ENCODE measurements at regions of chr3 and their contacts with region 1.

Region 1: DNA sequence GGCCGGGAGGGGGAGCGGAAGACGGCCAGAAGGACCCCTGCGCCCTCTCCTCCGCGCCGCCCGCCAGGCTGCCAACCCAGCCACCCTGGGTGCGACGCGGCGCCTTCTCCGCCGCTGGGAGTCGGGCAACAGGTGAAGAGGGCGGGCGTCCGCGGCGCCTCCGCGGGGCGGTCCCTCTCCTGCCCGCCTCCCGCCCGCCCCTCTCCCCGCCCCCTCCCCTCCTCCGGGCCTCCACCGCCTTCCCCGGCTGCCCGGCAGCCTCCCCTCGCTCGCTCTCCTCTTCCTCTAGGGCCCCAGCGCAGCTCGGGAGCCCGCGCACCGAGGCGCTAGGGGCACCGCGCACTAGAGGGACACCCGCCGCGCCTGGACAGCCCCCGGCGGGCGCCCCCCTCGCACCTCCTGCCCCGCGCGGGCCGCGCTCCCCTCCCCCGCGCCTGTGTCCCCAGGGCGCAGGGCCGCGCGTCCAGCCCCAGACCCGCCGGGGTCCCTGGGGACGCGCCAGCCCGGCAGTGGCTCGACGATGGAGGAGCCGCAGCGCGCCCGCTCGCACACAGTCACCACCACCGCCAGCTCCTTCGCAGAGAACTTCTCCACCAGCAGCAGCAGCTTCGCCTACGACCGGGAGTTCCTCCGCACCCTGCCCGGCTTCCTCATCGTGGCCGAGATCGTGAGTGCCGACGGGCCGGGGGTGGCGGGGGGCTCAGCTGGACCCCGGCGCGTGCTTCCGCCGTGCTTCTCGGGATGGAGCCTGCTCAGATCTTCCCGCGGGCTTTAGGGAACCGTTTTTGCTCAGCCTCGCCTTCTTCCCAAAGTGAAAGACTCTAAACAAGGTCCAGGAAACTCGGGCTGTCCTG is at the start of gene CMTM8:
- DNase-seq: peak; percentile 65 to 72 (median 67)
- H3K4me3 ChIP-seq: peak within 1 kb of the TSS; percentile 58 to 63
- H3K4me3 Mint-ChIP-seq: peak within 1 kb of the TSS; percentile 87 to 93 (median 90)
- H3K27ac ChIP-seq: peak within 1 kb of the TSS; percentile 57
- H3K27ac Mint-ChIP-seq: peak within 1 kb of the TSS; percentile 41 to 91 (median 66)
- H3K4me1 ChIP-seq: peaks cover 35% of the 10 kb centered on the region
- H3K4me1 Mint-ChIP-seq: peaks cover 28 to 50% (median 41%) of the 10 kb centered on the region in 4 donors
- H3K27me3 ChIP-seq: no peaks in the 10 kb centered on the region
- H3K27me3 Mint-ChIP-seq: no peaks in the 10 kb centered on the region
- total RNA-seq, gene CMTM8: 16.8 to 17.8 TPM

Region 2: DNA sequence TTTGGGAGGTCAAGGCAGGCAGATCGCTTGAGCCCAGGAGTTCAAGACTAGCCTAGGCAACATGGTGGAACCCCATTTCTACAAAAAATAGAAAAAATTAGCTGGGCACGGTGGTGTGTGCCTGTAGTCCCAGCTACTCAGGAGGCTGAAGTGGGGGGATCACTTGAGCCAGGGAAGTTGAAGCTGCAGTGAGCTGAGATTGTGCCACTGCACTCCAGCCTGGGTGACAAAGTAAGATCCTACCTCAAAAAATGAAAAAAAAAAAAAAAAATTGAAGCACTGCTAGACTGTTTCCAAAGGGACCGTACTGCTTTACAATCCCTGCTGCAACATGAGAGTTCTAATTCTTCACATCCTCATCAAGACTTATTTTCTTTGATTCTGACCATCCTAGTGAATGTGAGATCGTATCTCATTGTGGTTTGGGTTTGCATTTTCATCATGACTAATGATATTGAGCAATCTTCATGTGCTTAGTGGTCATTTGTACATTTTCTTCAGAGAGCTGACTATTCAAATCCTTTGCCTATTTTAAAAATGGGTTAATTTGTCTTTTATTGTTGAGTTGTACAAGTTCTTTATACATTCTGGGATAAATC is 10.6 kb after region 1 on chr3:
- CTCF ChIA-PET with region 1: interaction called, 10 read pairs
- POLR2A ChIA-PET with region 1: interaction called, 6 read pairs
- intact Hi-C with region 1: no loop called
- DNase-seq: no peak
- H3K4me3 ChIP-seq: no peak overlapping the region
- H3K4me3 Mint-ChIP-seq: peak overlapping the region in 2 of 8 donors; percentile 12 to 59
- H3K27ac ChIP-seq: no peak overlapping the region
- H3K27ac Mint-ChIP-seq: peak overlapping the region in 1 of 7 donors; percentile 46
- H3K4me1 ChIP-seq: peaks cover 38% of the 10 kb centered on the region
- H3K4me1 Mint-ChIP-seq: peaks cover 30 to 45% (median 34%) of the 10 kb centered on the region in 4 donors
- H3K27me3 ChIP-seq: no peaks in the 10 kb centered on the region
- H3K27me3 Mint-ChIP-seq: no peaks in the 10 kb centered on the region

Region 3: GRCh38 chr3:32257639-32258038 is 19.0 kb after region 1 on chr3:
- CTCF ChIA-PET with region 1: interaction called, 26 read pairs
- POLR2A ChIA-PET with region 1: interaction called, 4 read pairs
- intact Hi-C with region 1: no loop called
- DNase-seq: peak in 1 of 5 donors; percentile 6
- H3K4me3 ChIP-seq: no peak overlapping the region
- H3K4me3 Mint-ChIP-seq: peak overlapping the region in 4 of 8 donors; percentile 7 to 52 (median 12)
- H3K27ac ChIP-seq: no peak overlapping the region
- H3K27ac Mint-ChIP-seq: peak overlapping the region in 4 of 7 donors; percentile 1 to 24 (median 13)
- H3K4me1 ChIP-seq: peaks cover 19% of the 10 kb centered on the region
- H3K4me1 Mint-ChIP-seq: peaks cover 12 to 33% (median 21%) of the 10 kb centered on the region in 4 donors
- H3K27me3 ChIP-seq: no peaks in the 10 kb centered on the region
- H3K27me3 Mint-ChIP-seq: no peaks in the 10 kb centered on the region

Region 4: DNA sequence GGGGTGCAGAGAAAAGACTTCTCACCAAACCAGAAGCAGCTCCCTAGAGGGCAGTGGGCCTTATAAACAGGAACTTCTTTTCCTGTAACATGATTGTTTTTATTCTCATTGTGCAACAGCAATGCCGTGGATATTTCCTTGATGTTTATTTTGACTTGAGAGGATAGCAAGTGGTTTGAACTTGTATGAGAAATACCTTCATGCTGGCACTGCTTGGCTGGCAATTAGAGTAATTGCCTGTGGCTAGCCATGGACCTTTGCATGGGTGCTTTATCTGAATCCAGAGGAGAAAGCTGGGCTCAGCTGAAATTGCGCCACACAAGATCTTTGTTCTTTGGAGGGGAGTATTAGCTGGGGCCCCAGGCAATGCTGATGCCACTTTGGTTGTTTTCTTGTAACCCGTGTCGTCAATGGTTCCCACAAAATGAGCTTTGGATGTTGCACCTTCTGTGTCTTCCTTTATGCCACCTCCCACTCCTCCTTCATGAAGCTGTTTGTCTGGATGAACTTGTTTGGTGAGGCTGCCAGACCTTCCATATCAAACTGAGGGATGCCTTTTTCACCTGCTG is 37.7 kb after region 1 on chr3:
- CTCF ChIA-PET with region 1: interaction called, 12 read pairs
- POLR2A ChIA-PET with region 1: interaction called, 3 read pairs
- intact Hi-C with region 1: no loop called
- DNase-seq: no peak
- H3K4me3 ChIP-seq: no peak overlapping the region
- H3K4me3 Mint-ChIP-seq: no peak overlapping the region
- H3K27ac ChIP-seq: no peak overlapping the region
- H3K27ac Mint-ChIP-seq: peak overlapping the region in 2 of 7 donors; percentile 37 to 79
- H3K4me1 ChIP-seq: peaks cover 5% of the 10 kb centered on the region
- H3K4me1 Mint-ChIP-seq: peaks cover 17 to 27% (median 24%) of the 10 kb centered on the region in 4 donors
- H3K27me3 ChIP-seq: no peaks in the 10 kb centered on the region
- H3K27me3 Mint-ChIP-seq: no peaks in the 10 kb centered on the region

Region 5: GRCh38 chr3:32285891-32286290 is 47.2 kb after region 1 on chr3:
- CTCF ChIA-PET with region 1: interaction called, 72 read pairs
- POLR2A ChIA-PET with region 1: interaction called, 11 read pairs
- intact Hi-C with region 1: loop called (anchors 2 kb)
- DNase-seq: peak in 1 of 5 donors; percentile 46
- H3K4me3 ChIP-seq: no peak overlapping the region
- H3K4me3 Mint-ChIP-seq: peak overlapping the region in 7 of 8 donors; percentile 6 to 74 (median 59)
- H3K27ac ChIP-seq: peak overlapping the region; percentile 31
- H3K27ac Mint-ChIP-seq: peak overlapping the region; percentile 68 to 90 (median 83)
- H3K4me1 ChIP-seq: peaks cover 53% of the 10 kb centered on the region
- H3K4me1 Mint-ChIP-seq: peaks cover 30 to 62% (median 43%) of the 10 kb centered on the region in 4 donors
- H3K27me3 ChIP-seq: no peaks in the 10 kb centered on the region
- H3K27me3 Mint-ChIP-seq: no peaks in the 10 kb centered on the region

Region 6: DNA sequence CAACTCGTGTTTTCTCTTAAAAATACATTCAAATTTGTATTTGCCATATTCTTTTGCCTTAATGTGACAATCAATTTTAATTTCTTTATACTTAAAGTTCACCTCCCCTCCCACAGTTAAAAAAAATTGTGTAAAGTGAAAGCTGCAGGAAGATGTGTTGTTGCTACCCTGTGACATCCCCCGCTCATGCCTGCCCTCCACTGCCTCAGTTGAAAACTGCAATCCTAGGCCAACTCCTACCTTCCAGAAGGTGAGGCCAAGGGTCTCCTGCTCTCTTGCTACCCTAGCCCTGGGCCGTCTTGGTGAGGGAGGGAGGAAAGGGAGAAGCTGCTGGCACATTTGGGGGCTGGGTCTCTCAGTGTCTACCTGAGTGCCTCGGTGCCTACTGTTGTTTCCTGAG is 96.0 kb after region 1 on chr3:
- CTCF ChIA-PET with region 1: interaction called, 20 read pairs
- POLR2A ChIA-PET with region 1: interaction called, 15 read pairs
- intact Hi-C with region 1: loop called (anchors 1 kb)
- DNase-seq: peak; percentile 54 to 63 (median 58)
- H3K4me3 ChIP-seq: no peak overlapping the region
- H3K4me3 Mint-ChIP-seq: peak overlapping the region in 7 of 8 donors; percentile 32 to 74 (median 55)
- H3K27ac ChIP-seq: peak overlapping the region; percentile 24
- H3K27ac Mint-ChIP-seq: peak overlapping the region; percentile 7 to 84 (median 75)
- H3K4me1 ChIP-seq: peaks cover 45% of the 10 kb centered on the region
- H3K4me1 Mint-ChIP-seq: peaks cover 39 to 60% (median 52%) of the 10 kb centered on the region in 4 donors
- H3K27me3 ChIP-seq: no peaks in the 10 kb centered on the region
- H3K27me3 Mint-ChIP-seq: no peaks in the 10 kb centered on the region

Region 7: DNA sequence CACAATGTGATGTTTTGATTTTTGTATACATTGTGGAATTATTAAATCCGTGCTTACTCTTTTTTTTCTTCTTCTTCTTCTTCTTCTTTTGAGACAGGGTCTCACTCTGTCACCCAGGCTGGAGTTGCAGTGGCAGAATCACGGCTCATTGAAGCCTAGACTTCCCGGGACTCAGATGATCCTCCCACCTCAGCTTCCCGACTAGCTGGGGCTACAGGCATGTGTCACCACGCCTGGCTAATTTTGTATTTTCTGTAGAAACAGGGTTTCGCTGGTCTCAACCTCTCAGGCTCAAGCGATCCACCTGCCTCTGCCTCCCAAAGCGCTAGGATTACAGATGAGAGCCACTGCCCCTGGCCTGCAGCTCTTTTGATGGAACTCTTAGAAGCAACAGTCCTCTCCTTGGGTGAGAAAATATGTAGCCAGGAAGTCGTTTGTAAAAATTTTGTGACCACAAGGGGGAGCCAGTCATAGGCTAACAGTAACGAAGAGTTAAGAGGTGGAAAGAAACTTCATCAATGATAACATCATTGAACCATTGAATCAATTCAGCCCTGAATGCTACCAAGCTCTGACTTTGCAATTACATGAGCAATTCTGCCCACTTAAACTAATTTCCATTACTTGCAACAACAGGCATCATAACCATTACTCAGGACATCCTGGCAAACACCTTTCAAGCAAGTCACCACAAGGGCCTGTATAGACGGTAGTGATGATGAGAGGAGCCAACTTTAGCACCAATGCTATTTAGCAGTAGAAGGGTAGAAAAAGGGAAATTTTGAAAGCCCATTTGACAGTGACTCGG is 136.3 kb after region 1 on chr3:
- CTCF ChIA-PET with region 1: interaction called, 11 read pairs
- POLR2A ChIA-PET with region 1: no interaction called
- intact Hi-C with region 1: no loop called
- DNase-seq: peak; percentile 74 to 78 (median 78)
- H3K4me3 ChIP-seq: no peak overlapping the region
- H3K4me3 Mint-ChIP-seq: peak overlapping the region in 1 of 8 donors; percentile 21
- H3K27ac ChIP-seq: no peak overlapping the region
- H3K27ac Mint-ChIP-seq: peak overlapping the region in 5 of 7 donors; percentile 18 to 70 (median 33)
- H3K4me1 ChIP-seq: peaks cover 21% of the 10 kb centered on the region
- H3K4me1 Mint-ChIP-seq: peaks cover 18 to 28% (median 24%) of the 10 kb centered on the region in 4 donors
- H3K27me3 ChIP-seq: no peaks in the 10 kb centered on the region
- H3K27me3 Mint-ChIP-seq: no peaks in the 10 kb centered on the region

Measured in CD4-positive, alpha-beta memory T cell (primary cell).